ENCODE measurements at regions of chr11 and their contacts with region 1.

Region 1: GRCh38 chr11:59273373-59273841 is 60.7 kb upstream of the MPEG1 start:
- DNase-seq: no peak
- ATAC-seq: peak in 3 of 4 donors; percentile 35 to 83 (median 78)
- H3K4me3 ChIP-seq: no peak overlapping the region
- H3K27ac ChIP-seq: peak overlapping the region in 1 of 4 donors; percentile 50
- H3K4me1 ChIP-seq: no peaks in the 10 kb centered on the region
- H3K27me3 ChIP-seq: no peaks in the 10 kb centered on the region
- CTCF ChIP-seq: no peak

Region 2: DNA sequence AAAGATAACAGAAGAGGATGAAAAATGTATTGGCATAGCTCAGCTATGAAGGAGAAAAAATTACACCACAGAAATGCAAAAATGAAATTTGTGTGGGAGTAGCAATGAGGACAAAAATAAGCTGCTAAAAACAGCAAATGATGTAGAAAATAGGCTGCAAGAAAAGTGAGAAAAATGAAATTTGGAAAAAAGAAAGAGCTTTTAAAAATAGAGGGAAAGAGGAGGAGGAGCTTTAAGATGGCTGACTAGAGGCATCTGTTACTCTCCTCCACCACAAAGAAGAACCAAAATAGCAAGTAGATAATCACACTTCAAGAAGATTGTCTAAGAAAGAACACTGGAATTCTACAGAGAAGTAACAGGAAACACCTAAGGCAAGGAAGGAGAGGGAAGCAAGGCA is 61.6 kb after region 1 on chr11:
- intact Hi-C with region 1: loop called in 1 of 3 experiments (anchors 10 kb)
- DNase-seq: no peak
- ATAC-seq: no peak
- H3K4me3 ChIP-seq: no peak overlapping the region
- H3K27ac ChIP-seq: no peak overlapping the region
- H3K4me1 ChIP-seq: no peaks in the 10 kb centered on the region
- H3K27me3 ChIP-seq: no peaks in the 10 kb centered on the region
- CTCF ChIP-seq: no peak